Activated CD8-positive, alpha-beta T cell treated with anti-CD3 and anti-CD28 coated beads for 36 hours (primary cell): ENCODE measurements at regions of chr3 and their contacts with region 1.

Region 1: GRCh38 chr3:129824926-129825541 is 68.5 kb downstream of the TMCC1 start:
- DNase-seq: peak; percentile 52
- ATAC-seq: peak; percentile 58
- H3K4me3 Mint-ChIP-seq: no peak overlapping the region
- H3K27ac Mint-ChIP-seq: no peak overlapping the region
- H3K4me1 Mint-ChIP-seq: peaks cover 15% of the 10 kb centered on the region
- H3K27me3 Mint-ChIP-seq: no peaks in the 10 kb centered on the region
- CTCF ChIP-seq: peak; percentile 82

Region 2: DNA sequence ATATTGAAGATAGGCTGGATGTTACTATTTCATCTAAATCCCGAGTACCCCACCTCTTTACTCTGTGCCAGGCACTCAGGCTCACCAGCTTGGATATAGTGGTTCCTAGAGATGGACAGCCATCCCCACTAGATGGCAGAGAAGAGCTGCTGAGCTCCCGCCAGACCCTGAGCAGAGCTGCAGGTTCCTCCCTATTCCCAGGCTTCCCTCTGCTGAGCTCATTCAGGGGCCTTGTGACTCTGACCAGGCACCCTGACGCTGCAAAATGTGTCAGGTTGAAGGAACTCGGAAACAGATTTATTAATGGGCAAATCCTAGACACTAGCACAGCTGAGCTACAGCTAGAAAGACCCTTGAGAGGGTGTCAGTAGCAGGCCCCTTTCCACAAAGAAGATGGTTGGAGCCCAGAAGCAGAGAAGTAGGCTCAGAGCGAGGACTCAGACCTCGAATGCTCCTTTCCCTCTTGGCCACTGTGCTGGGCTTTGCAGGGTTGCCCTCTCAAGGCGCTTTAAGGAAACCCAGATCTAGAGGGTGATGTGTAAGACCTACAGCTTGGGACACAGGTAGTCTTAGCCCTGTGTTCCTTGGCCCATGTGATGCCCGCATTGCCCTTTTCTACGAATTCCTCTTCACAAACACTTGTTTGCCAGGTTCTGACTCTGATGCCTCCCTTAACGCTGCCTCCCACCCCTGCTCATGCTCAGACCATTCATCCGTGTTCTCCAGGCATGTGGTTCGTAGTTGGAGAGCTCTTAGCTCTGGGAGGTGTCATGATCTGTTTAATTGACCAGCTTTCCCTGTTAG is 334.6 kb before region 1 on chr3:
- CTCF ChIA-PET with region 1: interaction called, 8 read pairs
- POLR2A ChIA-PET with region 1: no interaction called
- intact Hi-C with region 1: loop called (anchors 2 kb)
- DNase-seq: peak; percentile 59
- ATAC-seq: peak; percentile 99
- H3K4me3 Mint-ChIP-seq: no peak overlapping the region
- H3K27ac Mint-ChIP-seq: no peak overlapping the region
- H3K4me1 Mint-ChIP-seq: no peaks in the 10 kb centered on the region
- H3K27me3 Mint-ChIP-seq: no peaks in the 10 kb centered on the region
- CTCF ChIP-seq: peak; percentile 76

Region 3: DNA sequence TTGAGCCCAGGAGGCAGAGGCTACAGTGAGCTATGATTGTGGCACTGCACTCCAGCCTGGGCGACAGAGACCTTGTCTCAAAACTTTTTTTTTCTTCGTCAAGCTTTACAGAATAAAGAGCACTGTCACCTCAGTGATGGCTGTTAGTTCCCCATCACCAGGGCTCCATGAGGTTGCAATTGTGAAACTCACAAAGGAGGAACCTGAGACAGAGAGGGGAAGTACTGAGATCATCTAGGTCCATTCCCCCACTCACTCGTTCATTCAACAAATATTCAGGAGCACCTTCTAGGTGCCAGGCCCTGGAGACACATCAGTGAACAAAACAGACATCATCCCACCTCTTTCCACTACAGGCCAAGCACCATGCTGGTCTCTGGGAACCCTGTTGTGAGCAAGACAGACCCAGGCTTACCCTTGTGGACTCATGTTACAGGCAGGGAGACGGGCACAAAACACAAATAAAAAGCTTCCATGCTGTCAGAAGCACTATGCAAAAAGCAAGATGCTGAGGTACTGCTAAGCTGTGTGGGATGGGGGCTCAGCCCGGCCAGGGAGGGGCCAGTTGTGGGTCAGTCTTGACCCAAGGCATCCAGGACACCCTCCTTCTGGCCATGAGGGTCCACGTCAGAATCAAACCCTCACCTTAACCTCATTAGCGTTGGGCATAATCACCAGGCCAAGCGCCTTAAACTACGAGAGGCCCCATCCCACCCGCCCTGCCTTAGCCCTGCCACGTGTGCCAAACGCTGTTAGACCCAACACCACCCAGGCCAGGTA is 298.7 kb before region 1 on chr3:
- CTCF ChIA-PET with region 1: no interaction called
- POLR2A ChIA-PET with region 1: no interaction called
- intact Hi-C with region 1: no loop called
- DNase-seq: no peak
- ATAC-seq: no peak
- H3K4me3 Mint-ChIP-seq: no peak overlapping the region
- H3K27ac Mint-ChIP-seq: no peak overlapping the region
- H3K4me1 Mint-ChIP-seq: no peaks in the 10 kb centered on the region
- H3K27me3 Mint-ChIP-seq: no peaks in the 10 kb centered on the region
- CTCF ChIP-seq: no peak

Region 4: DNA sequence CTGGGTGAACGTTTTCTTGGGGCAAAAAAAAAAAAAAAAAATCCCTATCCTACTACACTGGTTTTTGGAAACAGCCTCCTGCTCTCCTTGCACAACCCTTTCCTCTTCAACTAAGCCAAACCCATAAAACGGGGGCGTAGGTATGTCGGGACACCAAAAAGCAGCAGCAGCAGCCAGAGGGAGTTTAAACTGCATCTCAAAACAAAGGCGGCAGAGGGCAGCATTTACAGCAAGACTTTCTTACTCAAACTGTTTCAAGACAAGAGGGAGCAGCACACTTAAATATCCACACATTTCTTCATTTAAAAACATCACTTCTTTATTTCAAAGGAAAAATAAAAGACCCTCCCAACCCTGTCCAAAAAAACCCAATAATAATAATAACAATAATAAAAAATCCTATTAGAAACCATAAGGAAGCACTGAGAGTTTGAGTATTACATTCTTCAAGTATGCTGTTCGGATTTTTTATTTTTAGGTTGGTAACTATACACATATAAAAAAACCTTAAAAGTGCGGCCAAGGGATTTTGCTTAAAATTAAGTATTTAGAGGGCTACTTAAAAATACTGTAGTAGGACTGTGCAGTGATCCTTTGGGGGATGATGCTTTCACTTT is 174.7 kb before region 1 on chr3:
- CTCF ChIA-PET with region 1: interaction called, 46 read pairs
- POLR2A ChIA-PET with region 1: no interaction called
- intact Hi-C with region 1: loop called (anchors 5 kb)
- DNase-seq: peak; percentile 80
- ATAC-seq: peak; percentile 67
- H3K4me3 Mint-ChIP-seq: no peak overlapping the region
- H3K27ac Mint-ChIP-seq: no peak overlapping the region
- H3K4me1 Mint-ChIP-seq: peaks cover 4% of the 10 kb centered on the region
- H3K27me3 Mint-ChIP-seq: no peaks in the 10 kb centered on the region
- CTCF ChIP-seq: peak; percentile 71

Region 5: GRCh38 chr3:129809297-129809696 is 15.7 kb before region 1 on chr3:
- CTCF ChIA-PET with region 1: interaction called, 12 read pairs
- POLR2A ChIA-PET with region 1: no interaction called
- intact Hi-C with region 1: no loop called
- DNase-seq: no peak
- ATAC-seq: no peak
- H3K4me3 Mint-ChIP-seq: no peak overlapping the region
- H3K27ac Mint-ChIP-seq: no peak overlapping the region
- H3K4me1 Mint-ChIP-seq: peaks cover 13% of the 10 kb centered on the region
- H3K27me3 Mint-ChIP-seq: no peaks in the 10 kb centered on the region
- CTCF ChIP-seq: no peak

Region 6: DNA sequence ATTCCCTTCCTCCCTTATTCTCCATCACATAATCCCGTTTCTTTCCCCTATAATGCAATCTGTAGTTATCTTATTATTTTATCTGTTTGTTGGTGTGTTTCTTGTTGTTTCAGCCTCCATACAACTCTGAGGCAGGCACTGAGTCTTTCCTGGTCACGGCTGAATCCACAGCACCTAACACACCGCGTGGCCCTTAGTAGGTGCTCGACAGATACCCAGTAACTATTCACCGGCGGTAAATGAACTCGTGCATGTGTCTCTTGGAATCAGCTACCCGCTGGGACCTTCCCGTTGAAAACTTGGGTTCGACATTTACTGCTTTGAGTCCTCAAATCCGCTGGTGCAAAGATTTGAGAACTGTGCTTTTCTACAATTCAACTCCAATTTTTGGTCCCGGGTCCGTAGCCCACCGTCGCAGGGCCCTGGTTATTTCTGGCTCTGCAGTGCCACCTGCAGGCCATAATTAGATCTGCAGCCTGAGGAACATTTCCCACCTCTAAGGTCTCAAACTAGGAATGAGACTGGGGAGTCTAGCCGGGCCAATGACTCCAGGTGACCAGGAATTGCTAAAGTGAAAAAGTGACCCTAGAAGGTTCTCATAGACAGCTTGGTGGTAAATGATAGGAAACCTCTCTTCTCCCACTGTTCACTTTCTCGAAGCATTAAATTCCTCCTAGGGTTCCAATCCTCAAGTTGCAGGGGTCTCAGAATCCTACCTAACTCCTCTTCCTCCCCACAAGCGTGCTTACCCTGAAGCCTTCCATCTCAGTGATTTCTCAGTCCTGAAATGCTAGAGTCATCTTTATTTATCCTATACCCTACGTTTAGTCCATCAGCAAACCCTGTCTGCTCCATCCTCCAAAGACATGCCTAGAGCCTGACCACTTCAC is 109.4 kb after region 1 on chr3:
- CTCF ChIA-PET with region 1: interaction called, 6 read pairs
- POLR2A ChIA-PET with region 1: no interaction called
- intact Hi-C with region 1: loop called (anchors 5 kb)
- DNase-seq: peak; percentile 48
- ATAC-seq: peak; percentile 61
- H3K4me3 Mint-ChIP-seq: no peak overlapping the region
- H3K27ac Mint-ChIP-seq: no peak overlapping the region
- H3K4me1 Mint-ChIP-seq: peaks cover 2% of the 10 kb centered on the region
- H3K27me3 Mint-ChIP-seq: no peaks in the 10 kb centered on the region
- CTCF ChIP-seq: peak; percentile 94

Region 7: GRCh38 chr3:130010556-130010955 is 185.5 kb after region 1 on chr3:
- CTCF ChIA-PET with region 1: no interaction called
- POLR2A ChIA-PET with region 1: no interaction called
- intact Hi-C with region 1: no loop called
- DNase-seq: no peak
- ATAC-seq: no peak
- H3K4me3 Mint-ChIP-seq: no peak overlapping the region
- H3K27ac Mint-ChIP-seq: no peak overlapping the region
- H3K4me1 Mint-ChIP-seq: no peaks in the 10 kb centered on the region
- H3K27me3 Mint-ChIP-seq: peaks cover 9% of the 10 kb centered on the region
- CTCF ChIP-seq: no peak